H1 (cell line): ENCODE measurements at regions of chr7 and their contacts with region 1.

Region 1: DNA sequence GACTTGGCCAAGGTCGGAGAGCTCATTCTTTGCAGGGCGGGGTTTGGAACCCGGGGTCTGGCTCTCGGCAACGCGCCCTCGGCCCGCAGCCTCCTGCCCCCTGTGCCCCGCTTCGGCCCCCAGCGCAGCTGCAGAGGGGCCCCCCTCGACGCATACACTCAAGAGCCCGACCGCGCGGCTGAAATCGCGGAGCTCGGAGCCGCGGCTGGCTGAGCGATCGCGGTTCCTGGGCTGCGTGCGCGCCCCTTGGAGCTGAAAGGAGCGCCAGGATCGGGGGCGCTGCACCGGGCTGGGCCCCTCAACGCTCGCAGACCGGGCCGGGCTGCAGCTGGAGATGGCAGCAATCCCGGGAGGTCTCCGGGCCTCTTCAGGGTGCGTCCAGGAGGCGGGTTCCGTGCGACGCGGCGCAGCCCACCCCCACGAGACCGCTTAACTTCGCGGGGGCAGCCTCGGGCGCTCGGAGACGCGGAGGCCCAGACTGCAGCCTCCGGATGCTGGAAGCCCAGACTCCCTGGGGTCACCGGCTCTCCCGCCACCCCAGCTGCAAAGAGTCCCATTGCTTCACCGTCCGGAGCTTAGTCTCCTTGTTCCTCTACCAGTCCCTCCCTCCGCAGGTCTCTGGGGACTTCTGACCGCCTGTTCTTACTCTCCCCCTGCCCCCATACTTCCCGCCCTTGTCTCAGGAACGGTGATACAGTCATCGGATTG is 73.0 kb upstream of the LRRC4 start:
- DNase-seq: no peak
- H3K4me3 ChIP-seq: peak overlapping the region; percentile 29 to 61 (median 42)
- H3K27ac ChIP-seq: no peak overlapping the region
- H3K4me1 ChIP-seq: no peaks in the 10 kb centered on the region; a peak in 4 of 7 replicates
- H3K27me3 ChIP-seq: peaks cover 13 to 39% (median 28%) of the 10 kb centered on the region in 4 experiments
- CTCF ChIP-seq: no peak
- EP300 ChIP-seq: no peak
- POLR2A ChIP-seq: no peak; a peak in 1 of 3 replicates
- RAD21 ChIP-seq: no peak; a peak in 1 of 4 replicates

Region 2: DNA sequence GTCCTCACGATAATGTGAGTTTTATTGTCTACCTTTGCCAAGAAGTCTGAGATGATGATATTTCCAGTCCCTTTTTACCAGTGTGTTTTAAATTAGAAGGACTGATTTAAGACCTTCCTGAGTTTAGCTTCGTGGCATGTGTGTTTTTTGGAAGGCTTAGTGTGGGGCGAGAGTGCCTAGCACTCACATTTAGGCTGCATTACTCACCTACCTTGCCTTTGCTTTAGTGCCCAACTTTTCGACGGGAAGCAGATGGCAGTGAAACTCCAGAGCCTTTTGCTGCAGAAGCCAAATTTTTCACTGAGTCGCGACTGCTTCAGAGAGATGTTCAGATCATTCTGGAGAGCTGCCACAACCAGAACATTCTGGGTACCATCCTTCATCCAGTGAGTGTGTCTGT is 401.3 kb before region 1 on chr7:
- CTCF ChIA-PET with region 1: no interaction called
- POLR2A ChIA-PET with region 1: no interaction called
- DNase-seq: no peak
- H3K4me3 ChIP-seq: no peak overlapping the region
- H3K27ac ChIP-seq: no peak overlapping the region
- H3K4me1 ChIP-seq: no peaks in the 10 kb centered on the region
- H3K27me3 ChIP-seq: no peaks in the 10 kb centered on the region
- CTCF ChIP-seq: no peak
- EP300 ChIP-seq: no peak
- POLR2A ChIP-seq: no peak
- RAD21 ChIP-seq: no peak

Region 3: GRCh38 chr7:128059143-128059988 is 44.8 kb before region 1 on chr7:
- CTCF ChIA-PET with region 1: interaction called, 10 read pairs
- POLR2A ChIA-PET with region 1: no interaction called
- DNase-seq: no peak
- H3K4me3 ChIP-seq: no peak overlapping the region
- H3K27ac ChIP-seq: no peak overlapping the region
- H3K4me1 ChIP-seq: peaks cover 0 to 8% (median 2%) of the 10 kb centered on the region in 4 experiments; a peak in 1 of 7 replicates
- H3K27me3 ChIP-seq: no peaks in the 10 kb centered on the region
- CTCF ChIP-seq: no peak
- EP300 ChIP-seq: no peak
- POLR2A ChIP-seq: no peak
- RAD21 ChIP-seq: no peak

Region 4: DNA sequence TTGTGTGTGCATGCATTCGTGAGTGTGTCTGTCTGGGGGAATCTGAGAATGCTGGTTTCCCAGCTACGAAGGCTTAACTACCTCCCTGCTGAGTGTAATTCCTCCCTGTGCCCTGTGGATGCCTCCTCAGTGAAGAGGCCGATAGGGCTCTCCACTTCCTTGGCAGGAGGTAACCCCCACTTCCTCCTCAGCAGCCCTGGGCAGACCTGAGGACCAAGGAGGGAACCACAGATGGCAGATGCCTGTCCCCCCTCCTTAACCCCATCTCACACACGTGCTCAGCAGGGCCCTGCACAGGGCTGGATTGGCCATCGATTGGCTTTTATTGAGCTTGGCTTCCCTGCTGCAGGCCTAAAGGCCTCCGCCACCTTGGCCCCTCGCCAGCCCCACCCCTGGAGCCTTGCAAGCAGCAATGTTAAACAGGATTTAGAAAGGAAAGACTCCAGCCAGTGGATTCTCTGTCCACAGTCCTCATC is 27.4 kb before region 1 on chr7:
- CTCF ChIA-PET with region 1: interaction called, 10 read pairs
- POLR2A ChIA-PET with region 1: interaction called, 7 read pairs
- DNase-seq: no peak
- H3K4me3 ChIP-seq: no peak overlapping the region
- H3K27ac ChIP-seq: no peak overlapping the region
- H3K4me1 ChIP-seq: peaks cover 0 to 8% (median 0%) of the 10 kb centered on the region in 4 experiments; a peak in 3 of 7 replicates
- H3K27me3 ChIP-seq: no peaks in the 10 kb centered on the region
- CTCF ChIP-seq: no peak
- EP300 ChIP-seq: no peak
- POLR2A ChIP-seq: no peak
- RAD21 ChIP-seq: no peak

Region 5: GRCh38 chr7:128091106-128091505 is 13.1 kb before region 1 on chr7:
- CTCF ChIA-PET with region 1: interaction called, 16 read pairs
- POLR2A ChIA-PET with region 1: interaction called, 4 read pairs
- DNase-seq: no peak
- H3K4me3 ChIP-seq: no peak overlapping the region
- H3K27ac ChIP-seq: no peak overlapping the region
- H3K4me1 ChIP-seq: peaks cover 0 to under 1% (median 0%) of the 10 kb centered on the region in 4 experiments; a peak in 1 of 7 replicates
- H3K27me3 ChIP-seq: no peaks in the 10 kb centered on the region
- CTCF ChIP-seq: no peak
- EP300 ChIP-seq: no peak
- POLR2A ChIP-seq: no peak
- RAD21 ChIP-seq: no peak

Region 6: DNA sequence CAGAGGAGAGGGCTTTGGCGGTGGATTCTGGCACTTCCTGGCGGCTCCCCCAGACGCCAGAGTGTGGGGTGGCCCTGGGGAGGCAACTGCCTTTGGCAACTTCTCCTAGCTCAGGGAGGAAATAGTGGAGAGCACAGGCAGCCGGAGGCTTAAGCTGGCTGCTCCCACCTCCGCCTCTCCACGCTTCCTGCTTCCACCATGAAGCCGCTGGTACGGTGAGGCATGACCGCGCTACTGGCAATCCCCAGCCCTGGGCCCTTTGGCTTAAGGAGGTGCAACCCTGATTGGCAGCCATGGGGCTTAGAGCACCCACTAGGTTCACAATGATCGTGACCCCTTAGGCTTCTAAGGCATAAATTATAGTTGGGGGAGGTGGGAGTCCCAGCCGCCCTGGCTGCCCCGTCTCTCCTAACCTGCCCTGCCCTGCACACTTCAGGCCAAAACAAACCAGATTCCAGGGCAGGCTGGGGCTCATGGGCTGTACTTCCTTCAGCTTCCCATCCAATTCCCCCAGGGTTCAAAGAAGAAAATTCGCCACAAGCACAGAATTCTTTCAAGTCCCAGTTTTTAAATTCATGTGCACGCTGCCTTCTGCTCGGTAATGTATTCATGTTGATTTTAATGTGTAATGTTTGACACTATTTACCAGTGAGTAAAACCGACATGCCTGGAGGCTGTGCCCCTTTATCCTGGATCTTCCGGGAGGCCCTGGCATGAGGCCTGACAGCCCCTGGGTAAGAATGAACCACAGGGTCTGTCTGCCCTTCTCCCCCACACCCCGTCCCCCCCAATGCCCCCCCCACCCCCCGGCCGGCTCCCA is 17.7 kb after region 1 on chr7:
- CTCF ChIA-PET with region 1: interaction called, 9 read pairs
- POLR2A ChIA-PET with region 1: interaction called, 13 read pairs
- DNase-seq: no peak
- H3K4me3 ChIP-seq: no peak overlapping the region
- H3K27ac ChIP-seq: no peak overlapping the region
- H3K4me1 ChIP-seq: peaks cover 3 to 8% (median 4%) of the 10 kb centered on the region in 4 experiments; a peak in 6 of 7 replicates
- H3K27me3 ChIP-seq: peaks cover 0 to 4% (median 2%) of the 10 kb centered on the region in 4 experiments; a peak in 3 of 7 replicates
- CTCF ChIP-seq: no peak
- EP300 ChIP-seq: no peak
- POLR2A ChIP-seq: no peak
- RAD21 ChIP-seq: no peak